Dorsolateral prefrontal cortex (tissue), 120 donors: ENCODE measurements at regions of chr5 and their contacts with region 1.

Region 1: DNA sequence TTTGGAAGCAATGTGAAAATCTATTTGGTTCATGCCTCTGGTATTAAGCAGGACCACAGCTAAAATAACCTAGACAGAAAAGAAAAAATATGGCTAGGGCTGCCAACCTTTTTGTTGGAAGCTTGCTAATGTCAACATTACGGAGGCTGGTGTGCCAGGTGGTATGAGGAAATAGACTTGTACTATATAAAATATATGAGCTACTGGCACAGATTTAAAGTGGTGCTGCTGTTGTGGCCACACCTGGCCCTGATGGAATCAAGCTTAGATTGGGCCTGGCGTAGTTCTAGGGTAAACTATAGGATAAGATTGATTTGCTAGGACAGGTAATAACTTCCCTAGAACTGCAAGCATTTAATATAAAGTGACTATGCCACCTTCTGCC is 10.6 kb upstream of the PARP8 start:
- DNase-seq: no peak
- H3K4me3 ChIP-seq: no peak overlapping the region
- H3K27ac ChIP-seq: no peak overlapping the region
- H3K27me3 ChIP-seq: no peaks in the 10 kb centered on the region
- CTCF ChIP-seq: no peak

Region 2: DNA sequence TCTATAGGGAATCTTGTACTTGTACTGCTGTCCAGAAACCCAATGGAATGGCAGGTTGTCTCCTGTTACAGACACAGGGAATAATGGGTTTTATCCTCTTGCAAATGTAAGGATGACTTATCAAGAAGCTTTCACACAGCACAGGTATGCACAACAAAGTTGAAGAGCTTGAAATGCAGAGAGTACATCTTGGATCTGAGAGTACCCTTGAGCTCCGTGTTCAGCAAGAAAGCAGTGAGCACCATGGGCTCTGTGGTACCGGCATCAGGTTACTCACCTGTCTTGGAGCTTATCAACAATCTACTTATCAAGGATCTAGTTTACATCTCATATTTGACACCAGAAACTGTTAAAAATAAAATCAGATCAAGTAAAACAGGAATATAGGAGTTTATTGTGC is 192.8 kb before region 1 on chr5:
- intact Hi-C with region 1: no loop called
- DNase-seq: no peak
- H3K4me3 ChIP-seq: no peak overlapping the region
- H3K27ac ChIP-seq: no peak overlapping the region
- H3K27me3 ChIP-seq: no peaks in the 10 kb centered on the region
- CTCF ChIP-seq: no peak

Region 3: DNA sequence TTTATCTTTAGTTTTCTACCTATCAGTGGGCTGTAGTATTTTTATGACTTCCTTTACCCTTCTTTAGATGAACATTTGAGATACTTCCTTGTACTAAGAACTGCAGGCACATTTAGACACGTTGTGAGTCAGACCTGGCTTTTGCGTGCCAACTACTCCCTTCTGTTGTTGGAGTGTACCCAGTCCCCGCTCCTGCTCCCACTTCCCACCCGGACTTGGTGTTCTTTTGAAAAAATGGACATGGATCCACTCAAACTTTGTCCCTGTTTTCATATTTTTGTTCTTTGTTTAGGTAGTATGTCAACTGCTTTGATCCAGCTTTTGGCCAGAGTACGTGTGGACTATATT is 71.3 kb after region 1 on chr5:
- intact Hi-C with region 1: loop called in 1 of 2 experiments (anchors 5 kb)
- DNase-seq: peak in 9 of 10 donors; percentile 7 to 77 (median 55)
- H3K4me3 ChIP-seq: no peak overlapping the region
- H3K27ac ChIP-seq: peak overlapping the region in 22 of 59 donors; percentile 4 to 78 (median 58)
- H3K27me3 ChIP-seq: no peaks in the 10 kb centered on the region
- CTCF ChIP-seq: no peak